CD14-positive monocyte (primary cell): ENCODE measurements at regions of chr5 and their contacts with region 1.

Region 1: DNA sequence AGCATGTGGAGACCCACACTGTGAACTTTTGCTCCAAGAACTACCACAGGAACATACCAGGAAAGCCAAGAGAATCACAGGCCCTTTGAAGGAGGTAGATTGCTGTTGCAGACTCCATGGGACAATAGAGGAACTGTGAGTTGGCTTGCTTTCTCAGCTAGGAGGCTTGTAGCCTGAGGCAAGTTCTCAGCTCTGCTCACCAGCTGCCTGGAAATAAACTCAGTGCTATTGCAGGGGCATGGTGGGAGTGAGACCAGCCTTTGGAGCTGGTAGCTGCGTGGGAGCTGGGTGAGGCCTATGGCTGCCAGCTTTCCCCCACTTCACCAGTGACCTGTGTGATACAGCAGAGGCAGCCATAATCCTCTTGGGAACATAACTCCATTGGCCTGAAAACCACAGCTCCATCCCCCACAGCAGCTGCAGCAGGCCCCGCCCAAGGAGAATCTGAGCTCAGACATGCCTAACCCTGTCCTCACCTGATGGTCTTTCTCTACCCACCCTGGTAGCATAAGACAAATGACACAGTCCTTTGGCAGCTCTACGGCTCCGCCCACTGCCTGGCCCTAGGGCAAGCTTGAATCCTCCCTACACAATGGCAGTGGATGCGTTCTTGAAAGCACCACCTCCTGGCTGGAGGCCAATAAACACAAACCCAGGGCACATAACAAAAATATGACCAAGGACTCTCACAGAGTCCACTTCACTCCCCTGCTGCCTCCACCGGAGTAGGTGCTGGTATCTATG is 389.5 kb downstream of the KIF4B start:
- DNase-seq: no peak
- H3K4me3 ChIP-seq: no peak overlapping the region
- H3K4me3 Mint-ChIP-seq: no peak overlapping the region
- H3K27ac ChIP-seq: no peak overlapping the region
- H3K27ac Mint-ChIP-seq: no peak overlapping the region
- H3K4me1 ChIP-seq: no peaks in the 10 kb centered on the region
- H3K4me1 Mint-ChIP-seq: no peaks in the 10 kb centered on the region
- H3K27me3 ChIP-seq: no peaks in the 10 kb centered on the region
- H3K27me3 Mint-ChIP-seq: peaks cover 1% of the 10 kb centered on the region in 3 donors
- CTCF ChIP-seq: no peak

Region 2: GRCh38 chr5:155530046-155530445 is 126.9 kb after region 1 on chr5:
- intact Hi-C with region 1: no loop called
- DNase-seq: no peak
- H3K4me3 ChIP-seq: no peak overlapping the region
- H3K4me3 Mint-ChIP-seq: no peak overlapping the region
- H3K27ac ChIP-seq: no peak overlapping the region
- H3K27ac Mint-ChIP-seq: no peak overlapping the region
- H3K4me1 ChIP-seq: no peaks in the 10 kb centered on the region
- H3K4me1 Mint-ChIP-seq: no peaks in the 10 kb centered on the region
- H3K27me3 ChIP-seq: no peaks in the 10 kb centered on the region
- H3K27me3 Mint-ChIP-seq: no peaks in the 10 kb centered on the region
- CTCF ChIP-seq: no peak

Region 3: DNA sequence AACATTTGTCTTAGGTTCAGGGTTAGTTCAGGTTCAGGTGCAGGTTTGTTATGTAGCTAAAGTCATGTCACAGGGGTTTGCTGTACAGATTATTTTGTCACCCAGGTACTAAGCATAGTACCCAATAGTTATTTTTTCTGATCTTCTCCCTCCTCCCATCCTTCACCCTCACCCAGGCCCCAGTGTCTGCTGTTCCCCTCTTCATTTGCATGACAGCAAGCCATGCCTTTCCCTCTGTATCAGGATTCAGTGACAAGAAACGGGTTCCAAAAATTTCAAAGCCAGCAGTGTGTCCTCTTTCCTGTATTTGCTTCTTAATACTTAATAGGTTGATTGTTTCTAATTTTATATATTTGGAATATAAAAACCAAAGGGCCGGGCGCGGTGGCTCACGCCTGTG is 593.0 kb after region 1 on chr5:
- intact Hi-C with region 1: loop called in 1 of 2 experiments (anchors 10 kb)
- DNase-seq: no peak
- H3K4me3 ChIP-seq: no peak overlapping the region
- H3K4me3 Mint-ChIP-seq: no peak overlapping the region
- H3K27ac ChIP-seq: no peak overlapping the region
- H3K27ac Mint-ChIP-seq: peak overlapping the region in 1 of 7 donors; percentile 66
- H3K4me1 ChIP-seq: no peaks in the 10 kb centered on the region
- H3K4me1 Mint-ChIP-seq: no peaks in the 10 kb centered on the region
- H3K27me3 ChIP-seq: no peaks in the 10 kb centered on the region
- H3K27me3 Mint-ChIP-seq: peaks cover 0 to 1% (median 0%) of the 10 kb centered on the region in 3 donors
- CTCF ChIP-seq: no peak